ENCODE measurements at regions of chr4 and their contacts with region 1.

Region 1: GRCh38 chr4:103204111-103204510 is 6.0 kb upstream of the CENPE start:
- DNase-seq: peak; percentile 9
- H3K4me3 ChIP-seq: no peak overlapping the region
- H3K27ac ChIP-seq: no peak overlapping the region
- H3K4me1 ChIP-seq: no peaks in the 10 kb centered on the region
- H3K27me3 ChIP-seq: no peaks in the 10 kb centered on the region
- CTCF ChIP-seq: peak; percentile 47 to 66

Region 2: DNA sequence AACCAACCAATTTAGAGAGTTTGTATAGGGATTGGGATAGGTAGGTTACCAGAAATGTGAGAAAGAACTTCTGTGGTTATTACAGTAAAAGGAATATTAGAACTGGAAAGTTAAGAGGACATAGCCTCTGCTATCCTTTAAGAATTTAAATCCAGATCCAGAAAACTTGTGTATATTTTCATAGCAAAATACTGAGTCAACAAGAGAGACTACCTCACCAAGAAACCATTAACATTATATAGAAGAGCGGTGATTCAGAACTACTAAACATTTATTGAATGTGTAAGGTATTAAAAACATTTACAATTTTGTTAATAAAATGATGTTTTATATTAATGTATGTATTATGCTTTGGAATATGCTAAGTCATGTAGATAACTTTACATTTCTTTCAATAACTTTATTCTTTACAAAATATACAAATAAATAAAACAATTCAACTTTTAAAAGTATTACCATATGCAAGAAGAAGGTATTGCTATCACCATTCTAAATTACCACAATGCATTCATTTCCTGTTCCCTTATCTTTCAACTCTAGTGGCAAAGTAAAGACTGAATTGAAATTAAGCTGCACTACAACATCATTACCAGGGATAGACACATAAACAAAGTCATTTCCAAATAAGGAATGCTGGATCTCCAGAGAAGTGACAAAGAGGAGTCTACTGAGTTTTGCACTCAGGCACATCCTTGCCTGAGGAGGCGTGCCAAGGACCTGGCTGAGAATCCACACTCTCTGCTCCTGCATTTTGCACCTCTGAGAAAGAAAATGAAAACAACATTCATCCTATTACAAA is 98.4 kb before region 1 on chr4:
- CTCF ChIA-PET with region 1: no interaction called
- dilution Hi-C with region 1: no loop called
- in situ Hi-C with region 1: no loop called
- intact Hi-C with region 1: no loop called
- DNase-seq: no peak
- H3K4me3 ChIP-seq: no peak overlapping the region
- H3K27ac ChIP-seq: no peak overlapping the region
- H3K4me1 ChIP-seq: no peaks in the 10 kb centered on the region
- H3K27me3 ChIP-seq: no peaks in the 10 kb centered on the region
- CTCF ChIP-seq: no peak

Region 3: DNA sequence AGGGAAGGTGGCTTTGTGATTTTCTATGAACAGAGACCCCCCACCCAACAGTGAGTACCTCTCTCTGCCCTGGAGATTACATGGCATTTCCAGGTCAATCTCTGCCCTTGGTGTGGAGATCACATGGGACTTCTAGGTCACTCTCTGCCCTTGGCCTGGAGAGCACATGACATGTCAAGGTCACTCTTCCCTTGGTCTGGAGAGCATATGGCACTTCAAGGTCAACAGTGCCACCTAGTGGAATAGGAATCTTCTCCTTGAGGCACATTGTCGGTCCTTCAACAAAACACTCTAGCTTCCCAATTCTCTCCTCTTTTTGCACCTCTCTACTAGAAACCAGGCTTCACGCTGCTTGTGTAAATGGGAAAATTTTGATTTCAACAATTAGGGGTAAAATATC is 581.9 kb after region 1 on chr4:
- CTCF ChIA-PET with region 1: no interaction called
- dilution Hi-C with region 1: no loop called
- in situ Hi-C with region 1: loop called (anchors 10 kb)
- intact Hi-C with region 1: loop called (anchors 1 kb)
- DNase-seq: peak; percentile 30
- H3K4me3 ChIP-seq: no peak overlapping the region
- H3K27ac ChIP-seq: no peak overlapping the region
- H3K4me1 ChIP-seq: no peaks in the 10 kb centered on the region
- H3K27me3 ChIP-seq: no peaks in the 10 kb centered on the region
- CTCF ChIP-seq: peak; percentile 57 to 85

Region 4: DNA sequence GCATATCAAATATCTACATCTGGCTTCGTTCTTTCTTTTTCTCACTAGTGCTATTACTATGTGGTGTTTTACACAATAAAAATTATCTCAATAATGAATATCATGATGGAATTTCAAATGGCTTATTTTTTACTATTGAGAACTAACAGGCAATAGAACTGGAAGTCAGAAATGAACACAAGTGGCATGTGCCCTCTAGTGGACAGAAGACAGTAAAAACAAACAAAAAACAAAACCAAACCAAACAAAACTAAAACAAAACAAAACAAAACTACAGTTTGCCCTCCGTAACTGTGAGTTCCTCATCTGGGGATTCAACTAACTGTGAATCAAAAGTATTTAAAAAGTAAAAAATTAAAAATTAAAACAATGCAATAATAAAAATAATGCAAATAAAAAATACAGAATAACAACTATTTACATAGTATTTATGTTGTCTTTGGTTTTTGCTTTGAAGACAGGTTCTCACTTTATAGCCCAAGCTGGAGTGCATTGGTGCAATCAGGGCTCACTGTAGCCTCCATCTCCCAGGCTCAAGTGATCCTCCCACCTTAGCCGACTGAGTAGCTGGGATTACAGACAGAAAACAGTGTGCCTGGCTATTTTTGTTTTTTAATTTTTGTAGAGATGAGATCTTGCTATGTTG is 711.2 kb after region 1 on chr4:
- CTCF ChIA-PET with region 1: no interaction called
- dilution Hi-C with region 1: no loop called
- in situ Hi-C with region 1: loop called (anchors 10 to 25 kb)
- intact Hi-C with region 1: no loop called
- DNase-seq: peak; percentile 7
- H3K4me3 ChIP-seq: no peak overlapping the region
- H3K27ac ChIP-seq: no peak overlapping the region
- H3K4me1 ChIP-seq: no peaks in the 10 kb centered on the region
- H3K27me3 ChIP-seq: no peaks in the 10 kb centered on the region
- CTCF ChIP-seq: peak; percentile 54 to 61

Measured in mammary epithelial cell (primary cell).